ENCODE measurements at regions of chr6 and their contacts with region 1.

Region 1: DNA sequence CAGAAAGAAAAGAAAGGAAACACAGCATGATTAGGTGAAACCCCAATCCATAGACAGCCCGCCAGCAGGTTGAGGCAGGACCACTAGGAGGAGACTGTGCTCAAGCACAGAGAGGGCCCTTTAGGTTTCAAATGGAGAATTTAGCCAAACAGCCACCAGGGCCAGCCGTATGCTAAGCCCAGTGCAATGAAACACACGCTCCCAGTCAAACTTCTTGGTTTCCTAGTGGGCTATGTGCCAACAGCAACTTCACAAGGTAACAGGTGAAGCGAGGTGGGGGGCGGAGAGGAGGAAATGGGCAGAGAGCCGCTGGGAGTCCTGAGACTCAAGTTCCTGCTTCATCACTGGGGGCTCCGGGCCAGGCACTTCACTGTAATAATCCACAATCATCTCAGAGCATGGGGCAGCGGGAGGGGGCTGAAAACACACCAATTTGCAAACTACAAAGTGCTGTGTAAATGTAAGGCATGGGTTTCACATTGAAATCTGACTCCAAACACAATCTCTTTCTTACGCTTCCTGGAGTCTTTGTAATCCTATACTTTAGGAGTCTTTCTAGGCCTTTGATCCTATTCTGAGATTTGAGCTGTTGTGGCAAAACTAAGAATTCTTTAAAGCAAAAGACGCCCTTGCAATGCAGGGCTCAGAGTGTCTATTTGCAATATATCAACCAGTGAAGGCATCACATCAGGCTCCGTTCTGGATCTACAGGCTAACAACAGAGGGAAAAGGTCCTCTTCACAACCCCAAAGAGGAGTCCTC is 117.3 kb downstream of the OPRM1 start:
- DNase-seq: peak; percentile 81
- H3K4me3 Mint-ChIP-seq: peak overlapping the region; percentile 60
- H3K27ac Mint-ChIP-seq: peak overlapping the region; percentile 68
- H3K4me1 Mint-ChIP-seq: peaks cover 49% of the 10 kb centered on the region
- H3K27me3 Mint-ChIP-seq: no peaks in the 10 kb centered on the region

Region 2: GRCh38 chr6:153553627-153554026 is 602.7 kb before region 1 on chr6:
- CTCF ChIA-PET with region 1: no interaction called
- POLR2A ChIA-PET with region 1: no interaction called
- intact Hi-C with region 1: no loop called
- DNase-seq: no peak
- H3K4me3 Mint-ChIP-seq: no peak overlapping the region
- H3K27ac Mint-ChIP-seq: no peak overlapping the region
- H3K4me1 Mint-ChIP-seq: no peaks in the 10 kb centered on the region
- H3K27me3 Mint-ChIP-seq: no peaks in the 10 kb centered on the region

Region 3: GRCh38 chr6:154197196-154197860 is 41.0 kb after region 1 on chr6:
- CTCF ChIA-PET with region 1: interaction called, 3 read pairs
- POLR2A ChIA-PET with region 1: no interaction called
- intact Hi-C with region 1: loop called (anchors 2 kb)
- DNase-seq: no peak
- H3K4me3 Mint-ChIP-seq: peak overlapping the region; percentile 14
- H3K27ac Mint-ChIP-seq: peak overlapping the region; percentile 39
- H3K4me1 Mint-ChIP-seq: peaks cover 55% of the 10 kb centered on the region
- H3K27me3 Mint-ChIP-seq: no peaks in the 10 kb centered on the region

Region 4: GRCh38 chr6:154247119-154247861 is 91.0 kb after region 1 on chr6:
- CTCF ChIA-PET with region 1: interaction called, 10 read pairs
- POLR2A ChIA-PET with region 1: no interaction called
- intact Hi-C with region 1: loop called (anchors 1 kb)
- DNase-seq: peak; percentile 55
- H3K4me3 Mint-ChIP-seq: peak overlapping the region; percentile 87
- H3K27ac Mint-ChIP-seq: peak overlapping the region; percentile 79
- H3K4me1 Mint-ChIP-seq: peaks cover 80% of the 10 kb centered on the region
- H3K27me3 Mint-ChIP-seq: no peaks in the 10 kb centered on the region

Region 5: GRCh38 chr6:154370545-154370944 is 214.2 kb after region 1 on chr6:
- CTCF ChIA-PET with region 1: interaction called, 44 read pairs
- POLR2A ChIA-PET with region 1: no interaction called
- intact Hi-C with region 1: loop called (anchors 1 kb)
- DNase-seq: peak; percentile 31
- H3K4me3 Mint-ChIP-seq: no peak overlapping the region
- H3K27ac Mint-ChIP-seq: no peak overlapping the region
- H3K4me1 Mint-ChIP-seq: no peaks in the 10 kb centered on the region
- H3K27me3 Mint-ChIP-seq: no peaks in the 10 kb centered on the region

Region 6: DNA sequence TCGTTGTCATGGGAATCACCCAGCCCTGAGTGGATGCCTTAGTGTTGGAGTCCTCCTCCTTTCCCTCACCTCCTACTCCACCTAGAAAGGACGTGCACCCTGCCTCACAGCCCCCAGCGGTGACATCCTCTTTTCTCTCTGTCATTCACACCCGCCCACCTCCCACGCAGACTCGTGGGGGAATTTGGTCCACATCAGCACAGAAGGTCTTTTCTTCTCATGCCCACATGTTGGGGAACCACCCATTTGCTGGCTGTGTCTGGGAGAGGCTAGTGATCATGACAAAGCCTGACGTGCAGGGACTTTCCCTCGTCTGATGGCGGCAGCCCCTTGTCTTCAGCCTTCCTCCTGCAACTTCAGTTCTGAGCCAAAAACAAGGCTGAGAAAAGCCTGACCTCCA is 450.1 kb after region 1 on chr6:
- CTCF ChIA-PET with region 1: no interaction called
- POLR2A ChIA-PET with region 1: no interaction called
- intact Hi-C with region 1: loop called (anchors 5 kb)
- DNase-seq: peak; percentile 96
- H3K4me3 Mint-ChIP-seq: peak overlapping the region; percentile 24
- H3K27ac Mint-ChIP-seq: peak overlapping the region; percentile 67
- H3K4me1 Mint-ChIP-seq: peaks cover 43% of the 10 kb centered on the region
- H3K27me3 Mint-ChIP-seq: peaks cover 4% of the 10 kb centered on the region

Region 7: DNA sequence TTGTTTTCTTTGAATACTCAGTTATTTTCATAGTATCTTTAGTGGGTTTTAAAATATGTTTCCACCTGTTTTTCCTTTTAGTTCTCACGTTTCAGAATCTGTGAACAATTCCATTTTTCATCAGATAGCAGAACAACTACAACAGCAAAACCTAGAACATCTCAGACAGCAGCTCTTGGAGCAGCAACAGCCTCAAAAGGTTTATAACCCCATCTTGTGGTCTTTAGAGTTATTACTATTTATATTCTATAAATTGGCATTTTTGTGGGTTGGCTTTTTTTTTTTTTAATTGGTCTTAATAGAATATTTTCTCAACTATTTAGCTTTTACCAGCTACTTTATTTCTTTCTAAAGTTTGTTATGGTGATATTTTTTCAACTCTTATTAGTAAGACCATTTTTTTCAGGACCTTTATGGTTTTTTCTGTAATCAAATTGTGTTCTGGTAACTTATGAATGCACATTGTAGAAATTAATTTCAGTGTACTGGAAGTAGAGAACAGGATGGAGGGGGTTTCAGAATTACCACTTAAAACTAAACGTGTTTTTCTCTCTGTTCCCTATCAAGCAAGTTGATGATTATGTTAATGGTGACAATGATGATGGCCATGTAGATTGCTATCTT is 649.1 kb after region 1 on chr6:
- CTCF ChIA-PET with region 1: interaction called, 5 read pairs
- POLR2A ChIA-PET with region 1: no interaction called
- intact Hi-C with region 1: loop called (anchors 10 kb)
- DNase-seq: no peak
- H3K4me3 Mint-ChIP-seq: no peak overlapping the region
- H3K27ac Mint-ChIP-seq: no peak overlapping the region
- H3K4me1 Mint-ChIP-seq: peaks cover 3% of the 10 kb centered on the region
- H3K27me3 Mint-ChIP-seq: no peaks in the 10 kb centered on the region